Ascending aorta (tissue), 2 donors: ENCODE measurements at regions of chr6 and their contacts with region 1.

Region 1: GRCh38 chr6:33288921-33289748 is at the starts of genes PFDN6 and WDR46:
- DNase-seq: peak; percentile 45 to 92
- H3K4me3 ChIP-seq: peak within 1 kb of the TSS; percentile 79 to 80
- H3K27ac ChIP-seq: peak within 1 kb of the TSS; percentile 56 to 76
- H3K4me1 ChIP-seq: peaks cover 3 to 20% of the 10 kb centered on the region in 2 donors
- H3K27me3 ChIP-seq: no peaks in the 10 kb centered on the region
- CTCF ChIP-seq: no peak
- total RNA-seq, gene PFDN6: 11.3 TPM
- total RNA-seq, gene WDR46: 70.6 TPM

Region 2: GRCh38 chr6:33208091-33208967 is 80.8 kb before region 1 on chr6 and contains the start of gene RING1:
- intact Hi-C with region 1: loop called (anchors 1 kb)
- DNase-seq: peak; percentile 51 to 94
- H3K4me3 ChIP-seq: peak within 1 kb of the TSS; percentile 84 to 88
- H3K27ac ChIP-seq: peak within 1 kb of the TSS; percentile 94 to 95
- H3K4me1 ChIP-seq: peaks cover under 1 to 20% of the 10 kb centered on the region in 2 donors
- H3K27me3 ChIP-seq: no peaks in the 10 kb centered on the region
- CTCF ChIP-seq: no peak
- total RNA-seq, gene RING1: 28.5 TPM

Region 3: DNA sequence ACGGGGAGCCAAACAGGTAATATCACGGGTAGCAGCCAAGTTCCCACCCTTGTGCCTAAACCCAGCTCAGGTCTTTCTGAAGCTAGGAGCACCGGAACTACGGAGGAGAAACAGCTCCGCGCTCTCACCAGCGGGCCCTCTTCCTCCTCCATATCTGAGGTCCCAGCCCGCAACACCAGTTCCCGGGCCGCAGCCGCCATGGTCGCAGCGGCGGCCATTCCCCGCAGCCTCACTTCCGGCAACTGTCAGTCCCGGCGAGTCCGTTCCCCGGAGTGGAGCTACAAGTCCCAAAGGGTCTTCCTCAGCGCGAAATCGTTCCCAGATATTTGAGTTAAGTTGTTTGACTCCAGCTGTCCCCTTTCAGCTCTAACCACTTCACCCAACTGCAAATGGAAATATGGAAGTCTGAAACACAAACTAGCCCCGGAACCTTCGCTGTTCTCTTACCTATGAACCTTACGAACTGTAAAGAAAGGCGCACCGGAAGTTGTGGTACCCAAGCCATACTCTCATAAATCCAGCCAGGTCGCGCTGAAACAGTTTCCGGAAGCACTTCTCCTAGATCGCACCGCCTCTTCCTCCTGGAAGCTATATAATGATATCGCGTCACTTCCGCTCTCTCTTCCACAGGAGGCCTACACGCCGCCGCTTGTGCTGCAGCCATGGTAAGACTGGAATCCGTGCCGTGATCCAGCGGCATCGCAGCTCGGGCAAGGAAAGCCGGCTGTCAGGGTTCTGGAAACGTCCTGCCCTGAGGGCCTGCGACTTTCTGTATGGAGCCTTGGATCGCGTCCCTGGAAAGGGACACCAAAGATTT is 17.5 kb before region 1 on chr6 and contains the starts of genes RPS18 and VPS52:
- intact Hi-C with region 1: loop called (anchors 1 kb)
- DNase-seq: peak; percentile 81 to 98
- H3K4me3 ChIP-seq: peak within 1 kb of the TSS; percentile 71 to 94
- H3K27ac ChIP-seq: peak within 1 kb of the TSS; percentile 91 to 96
- H3K4me1 ChIP-seq: peaks cover 9 to 42% of the 10 kb centered on the region in 2 donors
- H3K27me3 ChIP-seq: no peaks in the 10 kb centered on the region
- CTCF ChIP-seq: no peak
- total RNA-seq, gene RPS18: 1,863 TPM
- total RNA-seq, gene VPS52: 50.1 TPM

Region 4: DNA sequence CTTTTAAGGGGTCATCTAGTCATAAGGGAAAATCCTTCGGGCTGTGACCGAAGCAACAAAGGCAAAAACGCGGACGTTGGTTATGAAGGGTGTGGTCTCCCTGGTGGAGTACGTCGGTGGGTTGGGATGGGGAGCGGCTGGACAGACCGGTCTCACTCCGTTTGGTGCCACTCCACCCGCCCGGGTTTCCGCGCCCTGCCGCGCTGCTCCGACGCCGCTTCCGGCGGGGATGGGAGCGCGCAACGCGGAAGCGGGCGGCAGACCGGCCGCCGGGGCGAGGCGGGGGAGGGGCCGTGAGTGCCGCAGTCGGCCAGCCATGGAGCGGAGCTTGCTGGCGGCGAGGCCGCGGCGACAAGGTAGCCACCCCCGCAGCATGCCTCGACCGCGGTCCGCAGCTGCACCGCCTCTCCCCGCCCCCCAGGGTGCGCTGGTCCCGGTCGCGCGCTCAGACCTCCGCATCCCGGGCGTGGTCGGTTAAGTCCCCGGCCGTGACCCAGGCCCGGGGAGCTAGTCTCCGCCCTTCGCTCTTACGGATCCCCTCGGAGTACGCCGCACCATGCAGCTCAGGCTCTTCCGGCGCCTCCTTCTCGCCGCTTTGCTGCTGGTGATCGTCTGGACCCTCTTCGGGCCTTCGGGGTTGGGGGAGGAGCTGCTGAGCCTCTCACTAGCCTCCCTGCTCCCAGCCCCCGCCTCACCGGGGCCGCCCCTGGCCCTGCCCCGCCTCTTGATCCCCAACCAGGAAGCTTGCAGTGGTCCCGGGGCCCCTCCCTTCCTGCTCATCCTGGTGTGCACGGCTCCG is 12.1 kb before region 1 on chr6 and contains the start of gene B3GALT4:
- intact Hi-C with region 1: loop called (anchors 1 kb)
- DNase-seq: peak in 1 of 2 donors; percentile 84
- H3K4me3 ChIP-seq: peak within 1 kb of the TSS; percentile 69 to 80
- H3K27ac ChIP-seq: peak within 1 kb of the TSS; percentile 85 to 93
- H3K4me1 ChIP-seq: peaks cover 9 to 36% of the 10 kb centered on the region in 2 donors
- H3K27me3 ChIP-seq: no peaks in the 10 kb centered on the region
- CTCF ChIP-seq: peak; percentile 55 to 61 (median 57)
- total RNA-seq, gene B3GALT4: 15.9 TPM